ENCODE measurements at regions of chr3 and their contacts with region 1.

Region 1: GRCh38 chr3:17915341-17915740 is 172.9 kb upstream of the TBC1D5 start:
- DNase-seq: no peak
- H3K4me3 ChIP-seq: no peak overlapping the region
- H3K27ac ChIP-seq: no peak overlapping the region
- H3K4me1 ChIP-seq: no peaks in the 10 kb centered on the region
- H3K27me3 ChIP-seq: peaks cover 53% of the 10 kb centered on the region
- CTCF ChIP-seq: no peak

Region 2: GRCh38 chr3:18279226-18279737 is 363.9 kb after region 1 on chr3:
- intact Hi-C with region 1: loop called (anchors 5 kb)
- DNase-seq: no peak
- H3K4me3 ChIP-seq: no peak overlapping the region
- H3K27ac ChIP-seq: no peak overlapping the region
- H3K4me1 ChIP-seq: peaks cover 3% of the 10 kb centered on the region
- H3K27me3 ChIP-seq: no peaks in the 10 kb centered on the region
- CTCF ChIP-seq: no peak